Gastrocnemius medialis (tissue), 4 donors: ENCODE measurements at regions of chr16 and their contacts with region 1.

Region 1: DNA sequence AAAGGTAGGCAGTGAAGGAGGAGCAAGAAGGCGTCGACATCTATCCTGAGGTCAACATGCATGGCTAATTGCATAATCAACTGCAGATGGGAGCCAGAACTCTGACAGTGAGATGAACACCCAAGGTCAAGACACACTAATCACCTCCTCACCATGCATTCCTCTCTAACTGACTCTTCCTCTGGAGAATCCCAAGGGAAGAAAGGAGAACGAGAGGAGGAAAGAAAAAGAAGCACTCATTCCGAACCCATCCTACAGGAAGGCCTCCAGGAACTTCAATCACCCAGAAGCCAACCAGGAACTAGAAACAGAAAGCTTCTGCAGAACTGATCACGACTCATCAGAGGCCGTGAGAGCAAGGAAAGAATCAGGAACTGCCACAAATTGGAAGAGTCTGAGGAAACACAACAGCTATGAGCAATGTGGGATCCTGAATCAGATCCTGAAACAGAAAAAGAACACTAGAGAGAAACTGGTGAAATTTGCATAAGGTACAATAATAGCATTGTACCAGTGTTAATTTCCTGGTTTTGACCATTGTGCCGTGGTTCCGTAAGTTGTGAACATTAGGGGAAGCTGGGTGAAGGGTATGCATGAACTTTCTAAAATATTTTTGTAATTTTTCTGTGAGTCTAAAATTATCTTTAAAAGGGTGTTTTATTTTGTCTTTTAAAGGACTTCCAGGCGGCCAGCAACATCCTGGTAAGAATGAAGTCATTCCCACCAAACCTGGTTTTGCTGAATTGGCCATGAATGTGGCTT is 10.0 kb upstream of the BEAN1 start:
- DNase-seq: no peak
- ATAC-seq: no peak
- H3K4me3 ChIP-seq: no peak overlapping the region
- H3K27ac ChIP-seq: no peak overlapping the region
- H3K4me1 ChIP-seq: no peaks in the 10 kb centered on the region
- H3K27me3 ChIP-seq: peaks cover 0 to 2% (median 2%) of the 10 kb centered on the region in 3 donors
- CTCF ChIP-seq: no peak
- POLR2A ChIP-seq: no peak

Region 2: DNA sequence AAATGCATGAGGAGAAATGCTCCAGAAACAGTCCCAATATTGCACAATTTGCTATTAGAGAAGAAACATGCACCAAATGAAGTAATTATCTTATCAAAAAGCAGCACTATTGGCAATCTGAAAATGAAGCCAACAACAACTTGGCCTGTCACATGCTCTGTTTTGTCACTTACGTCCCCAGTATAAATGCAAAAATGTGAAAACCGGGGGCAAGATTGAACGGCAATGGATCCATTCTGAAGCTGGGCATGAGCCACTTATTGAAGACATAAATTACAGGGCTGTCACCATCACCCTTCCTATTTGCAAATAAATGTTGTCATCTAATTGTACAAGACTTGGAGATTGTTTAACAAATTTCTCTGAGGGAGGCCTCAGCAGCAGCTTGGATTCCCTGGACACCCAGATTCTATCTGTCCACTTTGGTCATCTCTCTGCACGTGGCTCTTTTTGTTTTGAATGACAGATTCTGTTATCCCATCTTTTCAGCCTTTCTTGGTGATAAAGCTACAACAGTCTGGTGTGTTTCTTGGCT is 230.8 kb before region 1 on chr16:
- in situ Hi-C with region 1: no loop called
- intact Hi-C with region 1: no loop called
- DNase-seq: no peak
- ATAC-seq: no peak
- H3K4me3 ChIP-seq: no peak overlapping the region
- H3K27ac ChIP-seq: no peak overlapping the region
- H3K4me1 ChIP-seq: no peaks in the 10 kb centered on the region
- H3K27me3 ChIP-seq: no peaks in the 10 kb centered on the region
- CTCF ChIP-seq: no peak
- POLR2A ChIP-seq: no peak

Region 3: GRCh38 chr16:66324815-66325515 is 92.2 kb before region 1 on chr16:
- in situ Hi-C with region 1: no loop called
- intact Hi-C with region 1: no loop called
- DNase-seq: no peak
- ATAC-seq: no peak
- H3K4me3 ChIP-seq: no peak overlapping the region
- H3K27ac ChIP-seq: no peak overlapping the region
- H3K4me1 ChIP-seq: no peaks in the 10 kb centered on the region
- H3K27me3 ChIP-seq: peaks cover 0 to 10% (median 5%) of the 10 kb centered on the region in 3 donors
- CTCF ChIP-seq: no peak
- POLR2A ChIP-seq: no peak

Region 4: GRCh38 chr16:66588981-66589713 is 172.0 kb after region 1 on chr16:
- in situ Hi-C with region 1: loop called in 1 of 4 experiments (anchors 10 kb)
- intact Hi-C with region 1: no loop called
- DNase-seq: no peak
- ATAC-seq: no peak
- H3K4me3 ChIP-seq: no peak overlapping the region
- H3K27ac ChIP-seq: no peak overlapping the region
- H3K4me1 ChIP-seq: no peaks in the 10 kb centered on the region
- H3K27me3 ChIP-seq: no peaks in the 10 kb centered on the region
- CTCF ChIP-seq: peak in 4 of 5 experiments; percentile 33 to 51 (median 44)
- POLR2A ChIP-seq: no peak

Region 5: GRCh38 chr16:66859397-66860068 is 442.4 kb after region 1 on chr16:
- in situ Hi-C with region 1: loop called in 2 of 4 experiments (anchors 10 to 25 kb)
- intact Hi-C with region 1: no loop called
- DNase-seq: no peak
- ATAC-seq: no peak
- H3K4me3 ChIP-seq: no peak overlapping the region
- H3K27ac ChIP-seq: no peak overlapping the region
- H3K4me1 ChIP-seq: no peaks in the 10 kb centered on the region
- H3K27me3 ChIP-seq: no peaks in the 10 kb centered on the region
- CTCF ChIP-seq: no peak
- POLR2A ChIP-seq: no peak